Dendritic cell treated with granulocyte-macrophage colony-stimulating factor and Interleukin-4, amounts not matched to agents 40 ng/mL and 50 ng/mL, for 4 days (primary cell): ENCODE measurements at regions of chr10 and their contacts with region 1.

Region 1: DNA sequence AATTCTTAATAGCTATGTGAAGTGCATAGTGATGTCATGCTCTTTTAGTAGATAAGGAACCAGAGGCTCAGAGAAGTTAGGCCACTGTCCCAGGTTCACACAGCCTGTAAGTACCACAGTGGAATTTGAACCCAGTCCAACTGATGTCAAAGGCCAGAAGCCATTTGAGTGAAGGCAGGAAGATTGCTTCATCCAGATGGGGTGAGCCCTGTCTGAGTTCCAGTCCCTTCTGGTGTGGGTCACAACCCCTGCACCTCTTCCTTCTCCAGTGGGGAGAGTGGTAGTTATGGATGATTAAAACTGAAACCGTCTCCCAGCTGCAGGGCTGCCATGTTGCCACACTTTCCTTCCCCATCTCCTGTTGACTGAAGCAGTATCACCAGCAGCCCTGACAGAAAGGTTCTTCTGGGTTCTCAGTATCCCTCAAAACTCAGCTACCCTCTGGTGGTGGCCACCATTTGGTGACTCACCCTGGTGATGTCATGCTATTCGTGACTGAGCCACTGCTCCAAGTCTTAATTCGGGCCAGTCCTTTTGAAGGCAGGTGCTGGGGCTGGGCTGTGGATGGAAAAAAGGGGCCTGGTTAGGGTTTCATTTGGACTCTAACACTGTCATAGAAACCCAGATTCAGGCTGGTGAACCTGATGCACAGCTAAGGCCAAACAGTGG is 1.5 kb upstream of the C10orf95 start:
- H3K4me3 Mint-ChIP-seq: peak overlapping the region; percentile 61
- H3K27ac Mint-ChIP-seq: peak overlapping the region; percentile 89
- H3K4me1 Mint-ChIP-seq: peaks cover 61% of the 10 kb centered on the region
- H3K27me3 Mint-ChIP-seq: no peaks in the 10 kb centered on the region

Region 2: GRCh38 chr10:102432162-102432950 is 20.4 kb before region 1 on chr10 and contains the start of gene CUEDC2:
- intact Hi-C with region 1: loop called (anchors 2 kb)
- H3K4me3 Mint-ChIP-seq: peak within 1 kb of the TSS; percentile 92
- H3K27ac Mint-ChIP-seq: peak within 1 kb of the TSS; percentile 87
- H3K4me1 Mint-ChIP-seq: peaks cover 57% of the 10 kb centered on the region
- H3K27me3 Mint-ChIP-seq: no peaks in the 10 kb centered on the region

Region 3: DNA sequence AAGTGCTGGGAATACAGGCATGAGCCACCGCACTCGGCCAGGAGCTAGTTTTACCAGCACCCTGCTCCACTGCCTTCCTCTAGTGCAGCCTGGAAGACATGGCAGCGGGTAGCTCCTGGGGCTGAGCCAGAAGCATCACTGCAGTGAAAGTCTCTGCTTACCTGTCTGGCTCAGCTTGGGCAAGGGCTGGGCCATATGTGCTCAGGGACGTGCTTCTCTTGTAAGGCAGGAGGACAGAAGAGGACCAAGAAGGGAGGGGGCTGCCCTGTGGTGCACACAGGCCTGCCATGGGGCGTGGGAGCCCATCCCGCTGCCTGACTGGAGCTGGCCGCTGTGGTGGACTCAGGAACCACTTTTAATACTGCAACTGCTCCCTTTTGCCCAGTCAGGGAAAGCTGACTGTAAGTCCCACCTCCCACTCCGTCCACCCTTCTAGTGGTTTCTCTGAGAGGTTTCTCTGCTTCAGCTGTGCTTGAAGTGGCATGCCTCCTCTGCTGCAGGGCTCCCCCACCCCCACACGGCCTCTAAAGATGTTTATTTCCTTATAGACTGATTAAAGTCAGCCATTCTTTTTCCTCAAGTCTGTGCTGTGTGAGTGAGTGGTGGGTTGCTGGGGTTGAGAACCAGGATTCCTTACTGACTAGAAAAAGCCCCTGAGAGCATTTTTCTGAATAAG is 23.8 kb after region 1 on chr10:
- intact Hi-C with region 1: loop called (anchors 1 kb)
- H3K4me3 Mint-ChIP-seq: no peak overlapping the region
- H3K27ac Mint-ChIP-seq: no peak overlapping the region
- H3K4me1 Mint-ChIP-seq: peaks cover 10% of the 10 kb centered on the region
- H3K27me3 Mint-ChIP-seq: no peaks in the 10 kb centered on the region

Region 4: GRCh38 chr10:103153302-103154197 is 700.7 kb after region 1 on chr10:
- intact Hi-C with region 1: no loop called
- H3K4me3 Mint-ChIP-seq: no peak overlapping the region
- H3K27ac Mint-ChIP-seq: no peak overlapping the region
- H3K4me1 Mint-ChIP-seq: peaks cover 17% of the 10 kb centered on the region
- H3K27me3 Mint-ChIP-seq: no peaks in the 10 kb centered on the region